ENCODE measurements at regions of chr1 and their contacts with region 1.

Region 1: GRCh38 chr1:236545621-236546169 is 21.9 kb downstream of the LGALS8 start:
- DNase-seq: no peak
- H3K4me3 ChIP-seq: no peak overlapping the region
- H3K27ac ChIP-seq: no peak overlapping the region
- H3K4me1 ChIP-seq: no peaks in the 10 kb centered on the region
- H3K27me3 ChIP-seq: no peaks in the 10 kb centered on the region
- CTCF ChIP-seq: no peak

Region 2: GRCh38 chr1:236589531-236589930 is 43.8 kb after region 1 on chr1:
- CTCF ChIA-PET with region 1: no interaction called
- dilution Hi-C with region 1: no loop called
- in situ Hi-C with region 1: no loop called
- intact Hi-C with region 1: loop called (anchors 5 kb)
- DNase-seq: no peak
- H3K4me3 ChIP-seq: no peak overlapping the region
- H3K27ac ChIP-seq: no peak overlapping the region
- H3K4me1 ChIP-seq: no peaks in the 10 kb centered on the region
- H3K27me3 ChIP-seq: no peaks in the 10 kb centered on the region
- CTCF ChIP-seq: no peak